Endothelial cell of umbilical vein (primary cell): ENCODE measurements at regions of chr9 and their contacts with region 1.

Region 1: DNA sequence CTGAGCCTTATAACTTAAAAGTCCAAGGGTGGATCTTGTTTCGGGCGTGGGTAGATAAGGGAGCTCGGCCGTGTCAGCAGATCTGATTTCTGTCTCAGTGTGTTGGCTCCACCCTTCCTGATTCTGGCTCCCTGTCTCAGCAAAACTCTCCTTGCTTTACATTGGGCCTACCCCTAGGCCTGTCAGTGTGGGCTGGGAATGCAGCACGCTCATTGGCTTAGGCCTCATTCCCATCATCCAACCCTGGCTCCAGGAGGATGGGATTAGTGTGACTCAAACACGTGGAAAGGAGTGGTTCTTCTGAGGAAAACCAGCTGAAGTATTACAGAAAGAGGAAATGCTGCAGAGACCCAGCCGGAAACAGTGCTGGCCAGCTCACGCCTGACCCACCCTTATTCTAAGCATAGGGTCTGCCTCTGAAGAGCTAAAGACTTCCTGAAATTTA is 59.9 kb downstream of the ZFAND5 start:
- DNase-seq: peak; percentile 95
- H3K4me3 ChIP-seq: peak overlapping the region in 2 of 3 experiments; percentile 8 to 53
- H3K27ac ChIP-seq: peak overlapping the region; percentile 53
- H3K4me1 ChIP-seq: peaks cover 7% of the 10 kb centered on the region
- H3K27me3 ChIP-seq: no peaks in the 10 kb centered on the region
- CTCF ChIP-seq: no peak
- POLR2A ChIP-seq: peak; percentile 50

Region 2: GRCh38 chr9:72322259-72322658 is 17.1 kb after region 1 on chr9:
- CTCF ChIA-PET with region 1: no interaction called
- POLR2A ChIA-PET with region 1: no interaction called
- dilution Hi-C with region 1: no loop called
- intact Hi-C with region 1: no loop called
- DNase-seq: no peak
- H3K4me3 ChIP-seq: no peak overlapping the region
- H3K27ac ChIP-seq: no peak overlapping the region
- H3K4me1 ChIP-seq: no peaks in the 10 kb centered on the region
- H3K27me3 ChIP-seq: no peaks in the 10 kb centered on the region
- CTCF ChIP-seq: no peak
- POLR2A ChIP-seq: no peak

Region 3: GRCh38 chr9:72351538-72352453 is 46.7 kb after region 1 on chr9:
- CTCF ChIA-PET with region 1: no interaction called
- POLR2A ChIA-PET with region 1: no interaction called
- dilution Hi-C with region 1: no loop called
- intact Hi-C with region 1: loop called (anchors 1 kb)
- DNase-seq: peak; percentile 37
- H3K4me3 ChIP-seq: no peak overlapping the region
- H3K27ac ChIP-seq: no peak overlapping the region
- H3K4me1 ChIP-seq: no peaks in the 10 kb centered on the region
- H3K27me3 ChIP-seq: no peaks in the 10 kb centered on the region
- CTCF ChIP-seq: no peak
- POLR2A ChIP-seq: no peak

Region 4: GRCh38 chr9:72586388-72587130 is 281.4 kb after region 1 on chr9:
- CTCF ChIA-PET with region 1: no interaction called
- POLR2A ChIA-PET with region 1: no interaction called
- dilution Hi-C with region 1: no loop called
- intact Hi-C with region 1: loop called (anchors 5 kb)
- DNase-seq: peak; percentile 42
- H3K4me3 ChIP-seq: no peak overlapping the region
- H3K27ac ChIP-seq: no peak overlapping the region
- H3K4me1 ChIP-seq: peaks cover 19% of the 10 kb centered on the region
- H3K27me3 ChIP-seq: no peaks in the 10 kb centered on the region
- CTCF ChIP-seq: peak in 1 of 2 donors; percentile 4
- POLR2A ChIP-seq: no peak